ENCODE measurements at regions of chr10 and their contacts with region 1.

Region 1: DNA sequence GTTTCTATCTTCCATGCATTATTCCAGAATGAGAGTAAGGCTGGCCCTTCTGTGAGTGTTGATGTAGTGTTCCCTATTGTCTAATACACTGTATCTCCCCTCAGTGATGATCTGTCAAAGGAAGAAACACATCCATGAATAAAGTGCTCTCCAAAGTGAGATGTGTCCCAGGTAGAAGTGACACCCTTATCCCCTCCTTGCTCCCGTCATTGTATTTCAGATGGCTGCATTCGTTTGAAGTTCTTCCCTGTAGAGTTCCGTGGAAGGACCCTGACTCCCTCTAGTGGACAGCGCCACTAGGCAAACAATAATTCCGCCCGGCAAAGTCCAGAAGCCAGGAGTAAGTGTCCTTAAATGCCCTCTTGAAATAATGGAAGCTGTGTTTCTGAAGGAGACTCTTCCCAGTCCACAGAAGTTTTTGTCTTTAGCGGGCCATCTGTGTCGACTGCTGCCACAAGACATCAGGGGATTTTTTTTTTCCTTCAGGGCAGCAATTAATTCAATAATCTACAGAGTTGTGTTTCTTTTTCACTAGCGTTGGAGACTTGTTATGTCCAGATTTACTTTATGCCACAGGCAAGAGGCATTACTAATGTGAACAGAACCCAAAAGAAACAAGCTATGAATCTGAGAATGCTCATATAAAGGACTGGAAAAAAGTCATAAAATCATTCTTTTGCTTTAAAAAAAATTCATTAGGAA is 64.6 kb downstream of the THNSL1 start:
- DNase-seq: peak; percentile 60 to 95 (median 86)

Region 2: GRCh38 chr10:24642622-24643417 is 438.2 kb before region 1 on chr10:
- intact Hi-C with region 1: loop called (anchors 10 kb)
- DNase-seq: peak in 6 of 42 donors; percentile 16 to 65 (median 32)

Region 3: DNA sequence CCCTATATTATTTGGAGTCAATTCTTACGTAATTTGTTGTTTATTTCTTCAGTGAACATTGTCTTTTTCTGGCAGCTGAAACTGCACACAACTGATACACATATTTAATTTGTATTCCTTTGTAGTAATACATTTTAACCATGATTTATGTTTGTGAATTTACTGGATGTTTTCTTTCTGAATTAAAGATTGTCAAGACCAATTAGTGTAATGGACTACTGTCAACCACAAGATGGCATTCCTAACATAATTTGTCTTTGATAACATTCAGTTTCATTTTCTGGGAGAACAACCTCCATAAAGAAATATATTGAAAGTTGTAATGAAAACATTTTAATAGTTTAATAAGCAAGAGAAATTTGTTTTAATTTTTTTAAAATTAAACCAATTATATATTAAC is 54.6 kb before region 1 on chr10:
- intact Hi-C with region 1: loop called (anchors 5 kb)
- DNase-seq: no peak

Region 4: DNA sequence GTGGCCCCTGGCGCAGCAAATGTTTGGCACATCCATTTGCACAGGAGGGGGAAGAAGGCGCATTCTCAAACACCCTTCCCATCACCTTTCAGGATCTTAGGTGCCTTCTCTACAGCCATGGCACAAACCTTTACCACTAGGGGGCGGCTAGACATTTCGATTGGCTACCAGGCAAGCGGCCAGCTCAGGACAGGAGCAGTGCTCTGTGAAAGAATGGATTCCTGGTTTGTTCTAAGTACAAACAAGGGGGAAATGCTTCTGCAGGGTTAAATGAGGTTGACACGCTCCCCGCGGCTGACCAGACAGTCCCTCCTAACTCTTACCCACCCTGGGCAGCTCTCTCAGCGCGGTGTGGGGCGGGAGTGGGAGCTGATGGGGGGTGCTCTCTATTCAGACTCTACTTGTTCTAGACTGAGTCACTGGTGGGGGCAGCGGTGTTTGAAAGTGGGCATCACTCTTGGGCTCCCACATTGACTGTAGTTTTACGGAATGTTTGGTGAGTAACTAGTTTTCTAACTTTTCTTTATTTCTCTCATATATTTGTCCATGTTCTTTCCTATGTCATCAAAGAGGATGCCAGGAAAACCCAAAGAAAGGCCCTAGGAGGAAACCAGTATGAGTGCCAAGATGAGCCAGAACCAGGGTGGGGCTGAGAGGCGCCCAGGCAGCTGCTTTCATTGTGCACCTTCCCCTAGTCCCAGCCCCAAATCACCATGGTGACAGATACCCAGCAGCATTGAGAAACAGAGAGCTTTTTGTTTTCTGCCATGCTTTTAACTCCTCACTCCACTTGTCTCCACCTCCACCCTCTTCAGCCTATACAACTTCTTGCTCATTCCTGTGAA is 32.4 kb after region 1 on chr10:
- intact Hi-C with region 1: no loop called
- DNase-seq: peak; percentile 72 to 95 (median 85)

Measured in head of caudate nucleus (tissue), 42 donors.